GM10248 (cell line): ENCODE measurements at regions of chr4 and their contacts with region 1.

Region 1: DNA sequence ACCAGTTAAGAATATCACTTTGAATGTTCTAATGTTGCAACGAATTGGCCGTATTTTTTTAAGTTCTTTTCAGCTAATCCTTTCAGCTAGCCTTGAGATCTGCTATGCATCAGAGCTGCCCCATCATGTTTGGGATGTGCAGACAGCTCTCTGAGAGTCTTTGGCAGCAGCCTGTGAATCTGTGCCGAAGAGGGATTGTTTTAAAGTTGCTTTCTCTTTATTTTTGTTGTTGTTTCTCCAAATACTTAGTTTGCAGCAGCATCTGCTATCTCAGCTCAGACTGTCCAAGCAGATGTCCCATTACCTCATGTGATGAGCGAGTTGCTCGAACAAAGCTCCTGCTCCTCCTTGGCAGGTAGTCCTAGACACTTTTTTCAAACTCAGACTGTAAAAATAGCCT is 1002.5 kb upstream of the INTU start:
- DNase-seq: no peak
- CTCF ChIP-seq: no peak

Region 2: DNA sequence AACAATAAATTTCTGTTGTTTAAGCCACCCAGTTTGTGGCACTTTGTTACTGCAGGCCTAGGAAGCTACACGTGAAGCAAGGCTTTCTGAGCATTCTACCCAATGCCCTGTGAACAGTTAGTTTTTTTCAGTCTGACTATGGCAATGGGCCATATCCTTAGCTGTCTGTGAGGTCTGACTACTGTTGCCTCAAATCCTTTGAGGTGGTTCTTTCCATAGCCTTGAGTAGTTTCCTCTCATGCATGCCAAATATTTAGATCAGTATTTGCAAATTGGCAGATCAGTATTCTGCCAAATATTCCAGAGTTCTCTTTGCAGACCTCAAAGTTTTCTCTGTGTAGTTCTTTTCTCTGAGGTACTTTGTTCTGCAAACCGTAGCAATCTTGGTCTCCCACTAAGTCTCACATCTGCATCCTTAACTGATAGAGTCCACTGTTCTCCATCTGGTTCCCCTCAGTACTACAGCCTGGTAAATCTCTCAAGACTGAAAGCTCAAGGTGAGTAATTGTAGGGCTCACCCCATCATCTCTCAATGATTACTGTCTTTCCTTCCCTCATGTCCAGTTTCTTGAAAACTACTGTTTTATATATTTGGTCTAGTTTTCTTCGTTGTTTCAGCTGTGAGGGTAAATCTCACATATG is 17.6 kb after region 1 on chr4:
- CTCF ChIA-PET with region 1: interaction called, 17 read pairs
- POLR2A ChIA-PET with region 1: no interaction called
- DNase-seq: no peak
- CTCF ChIP-seq: no peak